AG04450 (cell line): ENCODE measurements at regions of chr6 and their contacts with region 1.

Region 1: DNA sequence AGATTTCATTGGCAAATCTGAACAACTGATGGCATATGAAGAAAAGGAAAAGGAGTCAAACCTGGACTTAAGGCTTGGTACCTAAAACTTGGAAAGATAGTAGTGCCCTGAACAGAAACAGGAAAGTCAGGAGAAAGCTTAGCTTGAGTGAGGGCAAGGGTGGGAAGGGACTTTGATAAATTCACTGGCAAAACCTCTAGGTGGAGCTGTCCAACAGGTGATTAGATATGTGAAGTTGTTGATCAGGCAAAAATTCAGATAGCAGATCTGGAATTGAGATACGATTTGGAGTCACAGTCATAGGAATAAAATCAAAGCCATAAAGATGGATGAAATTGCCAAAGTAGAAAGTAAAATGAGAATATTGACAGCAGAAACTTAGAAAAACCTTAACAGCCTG is 16.1 kb upstream of the ZNF292 start:
- DNase-seq: no peak
- H3K4me3 ChIP-seq: no peak overlapping the region
- H3K27ac ChIP-seq: no peak overlapping the region
- H3K27me3 ChIP-seq: no peaks in the 10 kb centered on the region
- CTCF ChIP-seq: peak; percentile 70

Region 2: GRCh38 chr6:86943819-86944407 is 195.3 kb before region 1 on chr6:
- CTCF ChIA-PET with region 1: no interaction called
- POLR2A ChIA-PET with region 1: no interaction called
- DNase-seq: no peak
- H3K4me3 ChIP-seq: no peak overlapping the region
- H3K27ac ChIP-seq: no peak overlapping the region
- H3K27me3 ChIP-seq: no peaks in the 10 kb centered on the region
- CTCF ChIP-seq: no peak

Region 3: DNA sequence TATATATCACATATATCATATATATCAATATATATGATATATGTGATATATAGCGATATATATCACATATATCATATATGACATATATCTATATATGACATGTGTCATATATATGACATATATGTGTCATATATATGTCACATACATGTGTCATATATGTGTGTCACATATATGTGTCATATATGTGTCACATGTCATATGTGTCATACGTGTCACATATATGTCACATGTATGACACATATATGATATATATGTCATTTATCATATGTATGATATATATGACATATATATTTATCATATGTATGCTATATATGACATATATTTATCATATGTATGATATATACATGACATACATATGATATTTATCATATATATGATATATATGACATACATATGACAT is 11.5 kb before region 1 on chr6:
- CTCF ChIA-PET with region 1: interaction called, 12 read pairs
- POLR2A ChIA-PET with region 1: no interaction called
- DNase-seq: no peak
- H3K4me3 ChIP-seq: no peak overlapping the region
- H3K27ac ChIP-seq: no peak overlapping the region
- H3K27me3 ChIP-seq: peaks cover 2% of the 10 kb centered on the region
- CTCF ChIP-seq: no peak

Region 4: DNA sequence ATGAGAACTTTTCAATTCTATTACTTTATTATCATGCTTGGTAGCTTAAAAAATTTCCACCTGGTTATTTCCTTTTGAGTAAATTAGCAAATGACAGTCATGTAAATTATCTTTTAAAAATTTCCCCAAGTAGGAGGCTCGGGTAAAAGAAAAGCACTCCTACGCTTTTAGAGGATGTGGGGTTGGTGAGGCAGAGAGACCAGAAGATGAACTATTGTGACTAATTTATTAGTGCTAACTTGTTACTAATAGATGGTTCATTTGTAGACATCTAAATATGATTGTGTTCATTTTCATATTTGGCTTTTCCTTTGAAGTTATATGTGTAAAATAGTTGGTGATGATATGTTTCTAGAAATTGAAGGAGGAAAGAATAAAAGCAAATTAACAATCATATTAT is 43.1 kb after region 1 on chr6:
- CTCF ChIA-PET with region 1: no interaction called
- POLR2A ChIA-PET with region 1: no interaction called
- DNase-seq: no peak
- H3K4me3 ChIP-seq: no peak overlapping the region
- H3K27ac ChIP-seq: no peak overlapping the region
- H3K27me3 ChIP-seq: no peaks in the 10 kb centered on the region
- CTCF ChIP-seq: no peak

Region 5: DNA sequence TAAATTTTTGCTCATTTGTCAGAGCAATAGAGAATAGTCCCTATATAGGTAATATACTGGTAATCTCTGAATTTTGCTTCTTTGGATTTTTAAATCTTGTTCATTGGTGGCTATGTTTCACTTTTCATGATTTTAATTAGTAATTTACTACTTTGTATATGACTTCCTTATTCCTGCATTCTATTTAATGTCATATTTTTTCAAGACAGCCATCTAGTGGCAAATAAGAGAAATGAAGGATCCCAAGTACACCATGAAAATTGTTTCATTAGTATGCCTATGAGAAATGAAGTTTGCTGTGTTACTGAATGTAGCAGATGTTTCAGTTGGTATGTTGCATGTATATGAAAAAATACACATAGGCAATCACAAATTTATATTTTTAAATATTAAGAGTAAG is 98.6 kb after region 1 on chr6:
- CTCF ChIA-PET with region 1: interaction called, 11 read pairs
- POLR2A ChIA-PET with region 1: no interaction called
- DNase-seq: no peak
- H3K4me3 ChIP-seq: no peak overlapping the region
- H3K27ac ChIP-seq: no peak overlapping the region
- H3K27me3 ChIP-seq: no peaks in the 10 kb centered on the region
- CTCF ChIP-seq: peak; percentile 64

Region 6: GRCh38 chr6:87393022-87393622 is 253.9 kb after region 1 on chr6:
- CTCF ChIA-PET with region 1: interaction called, 22 read pairs
- POLR2A ChIA-PET with region 1: no interaction called
- DNase-seq: no peak
- H3K4me3 ChIP-seq: no peak overlapping the region
- H3K27ac ChIP-seq: no peak overlapping the region
- H3K27me3 ChIP-seq: no peaks in the 10 kb centered on the region
- CTCF ChIP-seq: peak; percentile 73